MCF 10A (cell line): ENCODE measurements at regions of chr13 and their contacts with region 1.

Region 1: DNA sequence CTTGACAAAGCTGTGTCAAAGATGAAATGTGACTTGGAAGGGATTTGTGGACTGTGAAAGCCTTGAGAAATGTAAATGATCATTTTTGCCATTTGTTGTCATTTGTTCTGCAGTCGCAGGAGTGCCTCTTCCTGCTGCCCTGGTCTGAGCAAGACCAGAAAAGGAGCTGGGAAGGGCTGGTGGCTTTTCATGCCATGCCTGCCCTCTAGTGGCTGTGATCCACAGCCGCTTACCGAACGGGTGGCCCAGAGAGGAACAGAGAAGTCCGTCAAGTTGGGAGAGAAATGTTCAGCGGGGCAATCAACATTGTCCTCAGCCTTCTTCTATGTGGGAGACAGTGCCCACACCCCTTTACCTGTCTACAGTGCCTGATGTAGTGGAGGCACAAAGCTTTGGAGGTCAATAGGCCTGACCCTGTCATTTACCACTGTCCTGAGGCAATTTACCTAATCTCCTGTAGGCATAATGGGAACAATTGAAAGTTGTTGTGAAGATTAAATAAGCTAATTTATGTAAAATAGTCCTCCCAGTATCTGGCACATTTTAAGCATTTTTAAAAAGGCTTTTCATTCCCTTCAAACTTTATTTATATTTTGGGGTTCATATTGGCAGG is 224.4 kb downstream of the B3GLCT start:
- DNase-seq: peak; percentile 85
- H3K4me3 Mint-ChIP-seq: no peak overlapping the region
- H3K27ac Mint-ChIP-seq: no peak overlapping the region
- H3K4me1 Mint-ChIP-seq: peaks cover 10% of the 10 kb centered on the region
- H3K27me3 Mint-ChIP-seq: peaks cover 15% of the 10 kb centered on the region
- CTCF ChIP-seq: peak; percentile 80

Region 2: GRCh38 chr13:31174018-31174417 is 250.2 kb before region 1 on chr13:
- CTCF ChIA-PET with region 1: interaction called, 3 read pairs
- POLR2A ChIA-PET with region 1: no interaction called
- intact Hi-C with region 1: loop called (anchors 1 kb)
- DNase-seq: peak; percentile 17
- H3K4me3 Mint-ChIP-seq: no peak overlapping the region
- H3K27ac Mint-ChIP-seq: no peak overlapping the region
- H3K4me1 Mint-ChIP-seq: peaks cover 16% of the 10 kb centered on the region
- H3K27me3 Mint-ChIP-seq: no peaks in the 10 kb centered on the region
- CTCF ChIP-seq: no peak

Region 3: GRCh38 chr13:31227063-31227462 is 197.2 kb before region 1 on chr13:
- CTCF ChIA-PET with region 1: interaction called, 378 read pairs
- POLR2A ChIA-PET with region 1: no interaction called
- intact Hi-C with region 1: no loop called
- DNase-seq: no peak
- H3K4me3 Mint-ChIP-seq: no peak overlapping the region
- H3K27ac Mint-ChIP-seq: no peak overlapping the region
- H3K4me1 Mint-ChIP-seq: peaks cover 5% of the 10 kb centered on the region
- H3K27me3 Mint-ChIP-seq: no peaks in the 10 kb centered on the region
- CTCF ChIP-seq: no peak

Region 4: GRCh38 chr13:31409678-31410356 is 14.4 kb before region 1 on chr13:
- CTCF ChIA-PET with region 1: interaction called, 51 read pairs
- POLR2A ChIA-PET with region 1: no interaction called
- intact Hi-C with region 1: no loop called
- DNase-seq: peak; percentile 16
- H3K4me3 Mint-ChIP-seq: no peak overlapping the region
- H3K27ac Mint-ChIP-seq: no peak overlapping the region
- H3K4me1 Mint-ChIP-seq: no peaks in the 10 kb centered on the region
- H3K27me3 Mint-ChIP-seq: peaks cover 12% of the 10 kb centered on the region
- CTCF ChIP-seq: no peak

Region 5: DNA sequence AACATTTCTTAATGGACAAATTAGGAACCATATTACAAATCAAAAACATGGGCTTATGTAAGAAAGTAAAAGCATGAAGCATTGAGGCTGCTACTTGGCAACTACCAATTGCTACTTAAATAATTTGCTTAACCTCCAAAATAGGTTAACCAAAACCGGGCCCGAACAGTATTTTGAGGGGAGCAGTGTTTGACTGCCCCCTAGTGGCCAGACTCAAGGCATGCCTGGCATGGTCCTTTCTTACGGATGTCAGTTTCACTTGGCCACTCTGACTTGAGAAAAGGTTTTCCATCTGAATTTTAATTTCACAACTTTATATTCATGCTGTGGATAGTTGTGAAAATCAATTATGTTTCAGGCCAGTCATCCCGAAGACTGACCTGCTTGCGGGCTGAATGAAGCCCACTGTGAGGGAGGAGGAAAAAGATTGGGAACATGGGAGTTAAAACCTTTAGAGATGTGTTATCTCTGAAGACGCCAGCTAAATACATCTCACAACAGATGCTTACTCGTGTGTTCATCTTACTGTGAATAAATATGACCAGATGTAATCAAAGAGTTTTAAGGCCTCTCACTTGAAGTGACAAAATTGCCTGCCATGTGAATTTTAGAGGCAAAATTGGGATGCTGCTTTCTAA is 318.0 kb after region 1 on chr13:
- CTCF ChIA-PET with region 1: interaction called, 11 read pairs
- POLR2A ChIA-PET with region 1: no interaction called
- intact Hi-C with region 1: no loop called
- DNase-seq: peak; percentile 73
- H3K4me3 Mint-ChIP-seq: no peak overlapping the region
- H3K27ac Mint-ChIP-seq: no peak overlapping the region
- H3K4me1 Mint-ChIP-seq: peaks cover 5% of the 10 kb centered on the region
- H3K27me3 Mint-ChIP-seq: peaks cover 16% of the 10 kb centered on the region
- CTCF ChIP-seq: peak; percentile 90

Region 6: DNA sequence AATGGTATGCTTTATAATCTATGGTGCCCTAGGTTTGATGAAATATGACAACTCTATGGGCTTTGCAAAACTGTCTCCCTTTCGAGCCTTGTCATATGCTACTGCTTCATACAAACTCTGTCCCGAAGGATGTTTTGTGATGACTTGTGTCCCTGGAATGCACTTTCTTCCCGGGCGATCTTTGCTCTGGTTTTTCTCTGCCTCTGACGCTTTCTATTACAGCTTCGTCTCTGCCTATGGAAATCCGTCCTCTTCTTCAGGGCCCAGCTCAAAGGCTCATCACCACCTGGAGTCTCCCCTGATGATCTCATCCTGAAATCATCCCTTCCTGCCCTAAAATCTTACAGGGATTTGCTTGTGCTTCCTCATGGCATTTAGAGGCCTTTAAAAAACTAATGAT is 1400.4 kb after region 1 on chr13:
- CTCF ChIA-PET with region 1: no interaction called
- POLR2A ChIA-PET with region 1: no interaction called
- intact Hi-C with region 1: no loop called
- DNase-seq: peak; percentile 78
- H3K4me3 Mint-ChIP-seq: peak overlapping the region; percentile 17
- H3K27ac Mint-ChIP-seq: peak overlapping the region; percentile 24
- H3K4me1 Mint-ChIP-seq: peaks cover 23% of the 10 kb centered on the region
- H3K27me3 Mint-ChIP-seq: no peaks in the 10 kb centered on the region
- CTCF ChIP-seq: no peak